GM12878 (cell line): ENCODE measurements at regions of chr12 and their contacts with region 1.

Region 1: GRCh38 chr12:76031537-76032073 is at the start of gene PHLDA1:
- DNase-seq: peak; percentile 79
- ATAC-seq: peak; percentile 84
- H3K4me3 ChIP-seq: peak within 1 kb of the TSS; percentile 85
- H3K27ac ChIP-seq: peak within 1 kb of the TSS; percentile 75
- H3K4me1 ChIP-seq: peaks cover 17% of the 10 kb centered on the region
- H3K27me3 ChIP-seq: no peaks in the 10 kb centered on the region; a peak in 1 of 4 replicates
- CTCF ChIP-seq: peak; percentile 57 to 89 (median 72)
- EP300 ChIP-seq: peak in 1 of 2 experiments; percentile 60; a peak in 1 of 4 replicates
- POLR2A ChIP-seq: peak; percentile 94
- RAD21 ChIP-seq: peak; percentile 81
- polyA plus RNA-seq, gene PHLDA1: 0.66 to 0.87 TPM

Region 2: DNA sequence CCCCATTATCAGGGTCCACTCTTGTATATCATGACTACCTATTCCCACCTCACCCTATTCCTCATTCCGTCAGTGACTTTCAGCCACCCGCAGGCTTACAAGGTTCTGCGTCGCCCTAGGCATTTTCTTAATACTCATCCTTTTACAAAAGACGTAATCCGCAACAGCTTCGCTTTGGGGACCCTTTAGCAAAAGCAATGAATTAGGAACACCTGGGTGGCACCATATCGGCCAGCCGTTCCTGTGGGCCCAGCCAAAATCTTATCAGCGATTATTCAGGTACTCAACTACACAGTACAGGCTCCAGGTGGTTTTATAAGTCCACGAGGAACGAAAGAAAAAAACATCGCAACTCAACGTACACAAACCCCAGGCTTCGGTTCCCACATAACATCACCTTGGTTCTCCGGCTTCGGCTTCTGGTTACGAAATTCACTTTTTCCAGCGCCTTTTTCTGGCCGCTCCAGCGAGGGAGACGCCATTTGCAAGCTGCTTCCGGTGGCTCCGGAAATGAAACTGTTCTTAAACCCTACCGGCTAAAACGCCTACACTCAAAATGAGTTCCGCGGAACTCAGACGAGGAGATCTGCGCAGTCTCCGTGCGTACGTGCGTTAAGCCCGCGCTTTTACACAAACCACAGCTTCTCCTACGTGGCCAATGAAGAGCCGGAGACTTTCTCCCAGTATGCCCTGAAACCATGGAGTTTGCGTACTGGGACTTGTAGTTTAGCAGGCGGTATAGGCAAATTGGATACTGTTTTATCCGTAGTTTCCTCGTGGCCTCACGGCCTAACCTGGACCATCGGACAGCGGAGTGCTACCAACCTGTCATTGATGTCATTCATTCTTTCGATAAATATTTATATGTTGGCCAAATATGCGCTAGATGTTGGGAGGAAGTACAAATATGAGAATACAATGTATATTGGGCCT is 520.2 kb before region 1 on chr12 and contains the start of gene KRR1:
- CTCF ChIA-PET with region 1: interaction called, 13 read pairs
- POLR2A ChIA-PET with region 1: interaction called, 3 read pairs
- RAD21 ChIA-PET with region 1: interaction called, 20 read pairs
- SMC1A ChIA-PET with region 1: interaction called, 9 read pairs
- in situ Hi-C with region 1: no loop called
- intact Hi-C with region 1: loop called (anchors 5 kb)
- DNase-seq: peak; percentile 89
- ATAC-seq: peak; percentile 93
- H3K4me3 ChIP-seq: peak within 1 kb of the TSS; percentile 76
- H3K27ac ChIP-seq: peak within 1 kb of the TSS; percentile 85
- H3K4me1 ChIP-seq: no peaks in the 10 kb centered on the region; the same call in 1 of the 2 replicates
- H3K27me3 ChIP-seq: no peaks in the 10 kb centered on the region
- CTCF ChIP-seq: no peak
- EP300 ChIP-seq: no peak
- POLR2A ChIP-seq: peak; percentile 77
- RAD21 ChIP-seq: no peak
- polyA plus RNA-seq, gene KRR1: 74.4 to 81.0 TPM

Region 3: GRCh38 chr12:75641031-75641780 is 390.4 kb before region 1 on chr12:
- CTCF ChIA-PET with region 1: interaction called, 35 read pairs
- POLR2A ChIA-PET with region 1: interaction called, 30 read pairs
- RAD21 ChIA-PET with region 1: interaction called, 94 read pairs
- SMC1A ChIA-PET with region 1: interaction called, 100 read pairs
- in situ Hi-C with region 1: no loop called
- intact Hi-C with region 1: loop called (anchors 2 kb)
- DNase-seq: peak; percentile 87
- ATAC-seq: peak; percentile 96
- H3K4me3 ChIP-seq: no peak overlapping the region
- H3K27ac ChIP-seq: peak overlapping the region; percentile 76
- H3K4me1 ChIP-seq: peaks cover 22% of the 10 kb centered on the region
- H3K27me3 ChIP-seq: no peaks in the 10 kb centered on the region
- CTCF ChIP-seq: no peak
- EP300 ChIP-seq: peak; percentile 91 to 92
- POLR2A ChIP-seq: no peak
- RAD21 ChIP-seq: peak; percentile 40; the same call in 1 of the 2 replicates

Region 4: GRCh38 chr12:75814851-75815754 is 216.5 kb before region 1 on chr12:
- CTCF ChIA-PET with region 1: interaction called, 43 read pairs
- POLR2A ChIA-PET with region 1: interaction called, 3 read pairs
- RAD21 ChIA-PET with region 1: interaction called, 61 read pairs
- SMC1A ChIA-PET with region 1: interaction called, 47 read pairs
- in situ Hi-C with region 1: no loop called
- intact Hi-C with region 1: loop called (anchors 2 kb)
- DNase-seq: no peak
- ATAC-seq: peak; percentile 74
- H3K4me3 ChIP-seq: no peak overlapping the region
- H3K27ac ChIP-seq: no peak overlapping the region
- H3K4me1 ChIP-seq: peaks cover 4% of the 10 kb centered on the region; the same call in 1 of the 2 replicates
- H3K27me3 ChIP-seq: no peaks in the 10 kb centered on the region
- CTCF ChIP-seq: no peak
- EP300 ChIP-seq: no peak
- POLR2A ChIP-seq: no peak
- RAD21 ChIP-seq: no peak

Region 5: GRCh38 chr12:75939016-75939642 is 92.5 kb before region 1 on chr12:
- CTCF ChIA-PET with region 1: interaction called, 10 read pairs
- POLR2A ChIA-PET with region 1: interaction called, 5 read pairs
- RAD21 ChIA-PET with region 1: interaction called, 48 read pairs
- SMC1A ChIA-PET with region 1: interaction called, 78 read pairs
- in situ Hi-C with region 1: no loop called
- intact Hi-C with region 1: loop called (anchors 1 kb)
- DNase-seq: no peak
- ATAC-seq: no peak
- H3K4me3 ChIP-seq: no peak overlapping the region
- H3K27ac ChIP-seq: no peak overlapping the region
- H3K4me1 ChIP-seq: peaks cover 14% of the 10 kb centered on the region
- H3K27me3 ChIP-seq: no peaks in the 10 kb centered on the region
- CTCF ChIP-seq: no peak
- EP300 ChIP-seq: no peak
- POLR2A ChIP-seq: no peak
- RAD21 ChIP-seq: no peak

Region 6: GRCh38 chr12:75986001-75986746 is 45.4 kb before region 1 on chr12:
- CTCF ChIA-PET with region 1: interaction called, 24 read pairs
- POLR2A ChIA-PET with region 1: interaction called, 111 read pairs
- RAD21 ChIA-PET with region 1: interaction called, 125 read pairs
- SMC1A ChIA-PET with region 1: interaction called, 327 read pairs
- in situ Hi-C with region 1: no loop called
- intact Hi-C with region 1: loop called (anchors 1 kb)
- DNase-seq: no peak
- ATAC-seq: peak; percentile 60
- H3K4me3 ChIP-seq: no peak overlapping the region
- H3K27ac ChIP-seq: no peak overlapping the region
- H3K4me1 ChIP-seq: peaks cover 17% of the 10 kb centered on the region
- H3K27me3 ChIP-seq: no peaks in the 10 kb centered on the region
- CTCF ChIP-seq: no peak
- EP300 ChIP-seq: peak in 1 of 2 experiments; percentile 54; a peak in 1 of 4 replicates
- POLR2A ChIP-seq: no peak
- RAD21 ChIP-seq: no peak

Region 7: GRCh38 chr12:76113800-76114757 is 82.5 kb after region 1 on chr12:
- CTCF ChIA-PET with region 1: no interaction called
- POLR2A ChIA-PET with region 1: no interaction called
- RAD21 ChIA-PET with region 1: no interaction called
- SMC1A ChIA-PET with region 1: no interaction called
- in situ Hi-C with region 1: no loop called
- intact Hi-C with region 1: no loop called
- DNase-seq: no peak
- ATAC-seq: no peak
- H3K4me3 ChIP-seq: no peak overlapping the region
- H3K27ac ChIP-seq: no peak overlapping the region
- H3K4me1 ChIP-seq: no peaks in the 10 kb centered on the region
- H3K27me3 ChIP-seq: no peaks in the 10 kb centered on the region; a peak in 1 of 4 replicates
- CTCF ChIP-seq: no peak
- EP300 ChIP-seq: no peak
- POLR2A ChIP-seq: no peak
- RAD21 ChIP-seq: no peak

Region 8: DNA sequence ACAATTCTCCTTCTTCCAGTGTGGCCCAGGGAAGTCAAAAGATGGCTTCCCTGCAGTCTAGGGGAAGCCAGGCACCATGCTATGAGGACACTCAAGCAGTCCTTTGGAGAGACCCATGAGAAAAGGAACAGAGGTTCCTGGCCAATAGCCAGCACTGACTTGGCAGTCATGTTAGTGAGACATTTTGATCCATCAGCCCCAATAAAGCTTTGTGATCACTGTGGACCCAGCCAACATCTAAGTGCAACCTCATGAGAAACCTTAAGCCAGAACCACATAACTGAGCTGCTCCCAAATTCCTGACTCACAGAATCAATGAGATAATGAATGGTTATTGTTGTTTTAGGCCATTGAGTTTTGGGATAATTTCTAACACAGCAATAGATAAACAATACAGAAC is 103.9 kb after region 1 on chr12:
- CTCF ChIA-PET with region 1: no interaction called
- POLR2A ChIA-PET with region 1: no interaction called
- RAD21 ChIA-PET with region 1: no interaction called
- SMC1A ChIA-PET with region 1: no interaction called
- in situ Hi-C with region 1: no loop called
- intact Hi-C with region 1: no loop called
- DNase-seq: no peak
- ATAC-seq: no peak
- H3K4me3 ChIP-seq: no peak overlapping the region
- H3K27ac ChIP-seq: no peak overlapping the region
- H3K4me1 ChIP-seq: no peaks in the 10 kb centered on the region
- H3K27me3 ChIP-seq: no peaks in the 10 kb centered on the region
- CTCF ChIP-seq: no peak
- EP300 ChIP-seq: no peak
- POLR2A ChIP-seq: no peak
- RAD21 ChIP-seq: no peak

Region 9: DNA sequence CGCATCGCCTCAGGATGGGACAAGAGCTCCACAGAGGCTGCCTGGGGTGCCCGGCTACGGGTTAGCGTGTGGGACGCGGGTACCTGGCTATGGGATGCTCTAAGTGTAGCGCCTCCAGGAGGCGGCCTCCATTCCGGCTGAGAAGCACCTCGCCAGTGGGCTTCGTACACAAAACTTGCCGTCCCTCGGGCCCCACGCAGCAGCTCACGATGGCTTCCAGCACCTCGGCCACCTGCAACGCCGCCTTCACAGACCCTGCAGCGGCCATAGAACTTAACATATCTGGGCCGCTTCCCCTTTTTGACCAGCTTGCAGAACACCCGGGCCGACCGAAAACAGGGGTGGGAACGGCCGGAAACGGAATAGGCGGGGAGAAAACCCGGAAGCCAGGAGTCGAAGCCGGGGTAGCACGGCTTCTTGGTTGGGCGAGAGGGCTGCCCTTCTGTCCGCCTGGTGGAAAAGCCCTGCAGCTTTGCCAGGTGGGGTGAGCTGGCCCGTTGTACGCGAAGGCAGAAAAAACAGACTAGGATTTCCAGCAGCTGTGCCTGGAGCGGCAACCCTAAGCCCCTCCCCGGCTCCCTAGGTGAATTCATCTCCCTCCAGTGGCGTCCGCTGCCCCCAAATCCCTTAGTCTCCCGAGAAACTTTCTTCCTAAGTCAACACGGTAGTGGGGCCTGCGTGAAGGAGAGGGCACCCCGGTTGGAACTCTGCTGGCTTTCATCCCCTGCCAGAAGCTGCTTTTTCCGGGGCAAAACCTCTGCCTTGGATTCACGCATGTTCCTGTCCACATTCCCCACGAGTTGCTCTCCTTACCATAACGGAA is 316.7 kb after region 1 on chr12 and contains the start of gene BBS10:
- CTCF ChIA-PET with region 1: interaction called, 13 read pairs
- POLR2A ChIA-PET with region 1: interaction called, 8 read pairs
- RAD21 ChIA-PET with region 1: interaction called, 21 read pairs
- SMC1A ChIA-PET with region 1: interaction called, 6 read pairs
- in situ Hi-C with region 1: no loop called
- intact Hi-C with region 1: loop called (anchors 5 kb)
- DNase-seq: peak; percentile 70
- ATAC-seq: peak; percentile 99
- H3K4me3 ChIP-seq: peak within 1 kb of the TSS; percentile 84
- H3K27ac ChIP-seq: peak within 1 kb of the TSS; percentile 83
- H3K4me1 ChIP-seq: peaks cover 7% of the 10 kb centered on the region; the same call in 1 of the 2 replicates
- H3K27me3 ChIP-seq: no peaks in the 10 kb centered on the region
- CTCF ChIP-seq: peak in 2 of 3 experiments; percentile 22 to 39; a peak in 3 of 6 replicates
- EP300 ChIP-seq: no peak
- POLR2A ChIP-seq: peak; percentile 93
- RAD21 ChIP-seq: 0 out of 2 replicates have a peak, but pooled peaks have one; percentile 7
- polyA plus RNA-seq, gene BBS10: 1.2 to 1.5 TPM